ENCODE measurements at regions of chr3 and their contacts with region 1.

Region 1: DNA sequence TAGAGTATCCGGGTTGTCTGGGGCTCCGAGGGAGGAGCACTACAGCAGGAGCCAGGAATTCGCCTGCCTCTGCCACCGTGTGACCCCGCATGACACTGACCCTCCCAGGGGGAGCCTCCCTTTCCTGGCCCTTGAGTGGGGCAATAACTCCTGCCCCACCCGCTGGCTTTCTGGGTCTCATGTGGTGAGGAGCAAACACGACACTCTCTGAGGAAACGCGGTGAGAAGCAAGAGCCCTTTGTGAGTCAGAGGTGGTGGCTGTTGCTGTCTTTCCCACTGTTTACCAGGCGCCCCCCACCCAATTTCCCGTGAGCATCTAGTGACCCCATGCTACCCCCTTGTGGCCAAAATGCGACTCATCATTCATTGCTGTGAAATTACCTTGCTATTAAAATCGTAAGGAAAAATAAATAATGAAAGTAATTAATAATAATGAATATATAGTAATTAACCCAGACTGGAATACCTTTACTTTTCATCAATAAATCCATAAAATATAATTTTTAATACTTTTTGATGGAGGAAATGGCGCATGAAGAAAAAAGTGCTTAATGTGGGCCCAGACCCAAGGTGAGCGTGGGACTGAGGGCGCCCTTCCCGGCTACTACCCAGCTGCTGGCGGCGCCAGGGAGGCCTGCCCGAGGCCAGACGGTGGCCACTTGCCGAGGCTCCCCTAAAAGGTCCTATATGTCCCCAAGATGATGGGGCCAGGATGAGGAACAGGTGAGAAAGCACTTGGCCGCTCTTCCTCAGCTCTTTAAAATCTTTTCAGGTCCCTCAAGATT is 29.3 kb downstream of the CCNL1 start:
- DNase-seq: no peak
- ATAC-seq: peak; percentile 78
- H3K4me3 ChIP-seq: peak overlapping the region; percentile 18 to 58
- H3K27ac ChIP-seq: peak overlapping the region; percentile 90
- H3K4me1 ChIP-seq: peaks cover 50% of the 10 kb centered on the region
- H3K27me3 ChIP-seq: no peaks in the 10 kb centered on the region
- CTCF ChIP-seq: peak; percentile 92

Region 2: GRCh38 chr3:155995525-155996351 is 1134.9 kb before region 1 on chr3:
- CTCF ChIA-PET with region 1: no interaction called
- POLR2A ChIA-PET with region 1: no interaction called
- in situ Hi-C with region 1: no loop called
- intact Hi-C with region 1: loop called (anchors 10 kb)
- DNase-seq: peak; percentile 5
- ATAC-seq: peak; percentile 93
- H3K4me3 ChIP-seq: no peak overlapping the region
- H3K27ac ChIP-seq: no peak overlapping the region
- H3K4me1 ChIP-seq: no peaks in the 10 kb centered on the region
- H3K27me3 ChIP-seq: peaks cover 6% of the 10 kb centered on the region
- CTCF ChIP-seq: peak; percentile 62

Region 3: GRCh38 chr3:156535162-156535627 is 595.5 kb before region 1 on chr3:
- CTCF ChIA-PET with region 1: no interaction called
- POLR2A ChIA-PET with region 1: no interaction called
- in situ Hi-C with region 1: no loop called
- intact Hi-C with region 1: loop called (anchors 10 kb)
- DNase-seq: no peak
- ATAC-seq: peak; percentile 78
- H3K4me3 ChIP-seq: no peak overlapping the region
- H3K27ac ChIP-seq: no peak overlapping the region
- H3K4me1 ChIP-seq: no peaks in the 10 kb centered on the region
- H3K27me3 ChIP-seq: no peaks in the 10 kb centered on the region
- CTCF ChIP-seq: 0 out of 2 replicates have a peak, but pooled peaks have one; percentile 24

Region 4: DNA sequence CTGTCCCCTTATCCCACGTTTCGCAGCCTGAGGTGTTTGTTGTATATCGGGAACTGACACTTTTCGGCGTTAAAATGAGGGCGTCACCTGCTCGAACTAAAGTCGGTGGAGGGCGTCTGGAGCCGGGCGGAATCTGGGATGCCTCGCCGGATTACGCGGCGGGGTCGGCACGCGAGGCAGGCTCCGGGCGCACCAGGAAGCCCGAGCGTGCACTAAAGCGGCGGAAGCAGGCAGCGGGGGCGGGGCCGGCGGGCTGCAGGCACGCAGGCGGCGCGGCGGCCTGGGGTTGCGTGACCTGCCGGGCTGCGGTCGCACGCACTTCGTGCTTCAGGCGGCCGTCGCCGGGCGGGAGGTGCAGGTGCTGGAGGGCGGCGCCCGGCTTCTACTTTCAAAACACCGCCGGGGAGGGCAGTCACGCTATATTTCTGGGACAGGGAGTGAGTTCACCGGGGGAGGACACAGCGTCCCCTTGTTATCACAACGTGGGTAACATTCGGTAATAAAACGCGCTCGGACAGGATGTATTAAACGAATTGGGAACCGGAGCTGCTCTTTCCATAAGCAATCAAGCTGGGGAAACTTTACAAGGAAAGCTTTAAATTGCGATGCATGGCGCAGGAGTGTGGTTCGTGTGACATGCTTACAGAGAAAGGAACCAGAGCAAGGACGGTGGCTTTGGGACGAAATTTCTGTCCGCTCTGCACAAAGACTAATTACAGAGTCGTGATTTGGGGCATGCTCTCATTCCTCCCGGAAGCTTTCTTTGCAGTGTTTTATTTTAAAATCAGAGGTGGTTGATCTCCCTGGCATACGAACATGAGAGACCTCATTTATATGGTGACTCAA is 313.6 kb before region 1 on chr3:
- CTCF ChIA-PET with region 1: no interaction called
- POLR2A ChIA-PET with region 1: interaction called, 4 read pairs
- in situ Hi-C with region 1: no loop called
- intact Hi-C with region 1: loop called (anchors 5 kb)
- DNase-seq: peak; percentile 83
- ATAC-seq: peak; percentile 88
- H3K4me3 ChIP-seq: peak overlapping the region; percentile 60 to 86
- H3K27ac ChIP-seq: peak overlapping the region; percentile 97
- H3K4me1 ChIP-seq: peaks cover 51% of the 10 kb centered on the region
- H3K27me3 ChIP-seq: no peaks in the 10 kb centered on the region
- CTCF ChIP-seq: peak; percentile 40